B cell (primary cell): ENCODE measurements at regions of chr1 and their contacts with region 1.

Region 1: GRCh38 chr1:224182866-224183590 is at the start of gene DEGS1:
- DNase-seq: peak; percentile 93
- ATAC-seq: peak; percentile 82
- H3K4me3 ChIP-seq: peak within 1 kb of the TSS; percentile 74 to 90 (median 82)
- H3K4me3 Mint-ChIP-seq: peak within 1 kb of the TSS; percentile 93
- H3K27ac ChIP-seq: peak within 1 kb of the TSS; percentile 90 to 99
- H3K27ac Mint-ChIP-seq: peak within 1 kb of the TSS; percentile 94
- H3K4me1 ChIP-seq: peaks cover 41 to 51% of the 10 kb centered on the region in 2 donors
- H3K4me1 Mint-ChIP-seq: peaks cover 36% of the 10 kb centered on the region
- H3K27me3 ChIP-seq: no peaks in the 10 kb centered on the region
- H3K27me3 Mint-ChIP-seq: no peaks in the 10 kb centered on the region
- CTCF ChIP-seq: no peak
- total RNA-seq, gene DEGS1: 51.3 and 52.1 TPM in 2 replicates

Region 2: GRCh38 chr1:224127925-224128819 is 54.9 kb before region 1 on chr1:
- CTCF ChIA-PET with region 1: no interaction called
- POLR2A ChIA-PET with region 1: no interaction called
- intact Hi-C with region 1: no loop called
- DNase-seq: no peak
- ATAC-seq: no peak
- H3K4me3 ChIP-seq: no peak overlapping the region
- H3K4me3 Mint-ChIP-seq: no peak overlapping the region
- H3K27ac ChIP-seq: no peak overlapping the region
- H3K27ac Mint-ChIP-seq: no peak overlapping the region
- H3K4me1 ChIP-seq: no peaks in the 10 kb centered on the region
- H3K4me1 Mint-ChIP-seq: peaks cover 9% of the 10 kb centered on the region
- H3K27me3 ChIP-seq: no peaks in the 10 kb centered on the region
- H3K27me3 Mint-ChIP-seq: no peaks in the 10 kb centered on the region
- CTCF ChIP-seq: no peak

Region 3: DNA sequence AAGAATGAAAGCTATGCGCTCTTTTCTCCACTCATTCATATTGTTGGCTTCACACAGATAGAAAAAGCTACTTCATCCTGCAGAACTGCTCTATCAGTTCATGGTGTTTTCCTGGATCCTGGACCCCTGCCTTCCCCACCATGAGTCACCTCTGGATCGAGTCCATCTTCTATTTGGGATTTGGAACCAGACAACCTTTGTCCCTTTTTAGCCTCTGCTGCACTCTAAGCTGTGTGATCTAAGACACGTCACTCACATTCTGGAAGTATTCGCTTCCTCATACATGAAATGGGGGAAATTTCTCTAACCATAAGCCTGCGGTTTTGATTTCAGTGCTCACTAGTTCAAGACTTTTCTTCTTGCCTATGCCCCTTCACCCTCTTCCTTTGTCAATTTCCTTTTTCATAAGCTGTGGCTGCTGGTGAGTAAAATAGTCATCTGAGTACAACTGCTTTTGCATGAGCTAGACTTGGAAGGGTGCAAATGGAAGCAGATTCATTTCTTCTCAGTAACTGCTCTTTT is 14.1 kb before region 1 on chr1:
- CTCF ChIA-PET with region 1: interaction called, 20 read pairs
- POLR2A ChIA-PET with region 1: interaction called, 19 read pairs
- intact Hi-C with region 1: loop called (anchors 2 kb)
- DNase-seq: peak; percentile 85
- ATAC-seq: peak; percentile 86
- H3K4me3 ChIP-seq: peak overlapping the region in 1 of 5 experiments; percentile 40
- H3K4me3 Mint-ChIP-seq: peak overlapping the region; percentile 53
- H3K27ac ChIP-seq: peak overlapping the region; percentile 35 to 43
- H3K27ac Mint-ChIP-seq: peak overlapping the region; percentile 48
- H3K4me1 ChIP-seq: peaks cover 26 to 30% of the 10 kb centered on the region in 2 donors
- H3K4me1 Mint-ChIP-seq: peaks cover 27% of the 10 kb centered on the region
- H3K27me3 ChIP-seq: no peaks in the 10 kb centered on the region
- H3K27me3 Mint-ChIP-seq: no peaks in the 10 kb centered on the region
- CTCF ChIP-seq: no peak

Region 4: GRCh38 chr1:224245188-224245587 is 62.2 kb after region 1 on chr1:
- CTCF ChIA-PET with region 1: interaction called, 4 read pairs
- POLR2A ChIA-PET with region 1: interaction called, 21 read pairs
- intact Hi-C with region 1: loop called (anchors 2 kb)
- DNase-seq: peak; percentile 78
- ATAC-seq: peak; percentile 98
- H3K4me3 ChIP-seq: peak overlapping the region in 1 of 5 experiments; percentile 36
- H3K4me3 Mint-ChIP-seq: peak overlapping the region; percentile 21
- H3K27ac ChIP-seq: peak overlapping the region; percentile 90 to 91
- H3K27ac Mint-ChIP-seq: peak overlapping the region; percentile 97
- H3K4me1 ChIP-seq: peaks cover 33 to 36% of the 10 kb centered on the region in 2 donors
- H3K4me1 Mint-ChIP-seq: peaks cover 26% of the 10 kb centered on the region
- H3K27me3 ChIP-seq: no peaks in the 10 kb centered on the region
- H3K27me3 Mint-ChIP-seq: no peaks in the 10 kb centered on the region
- CTCF ChIP-seq: no peak

Region 5: DNA sequence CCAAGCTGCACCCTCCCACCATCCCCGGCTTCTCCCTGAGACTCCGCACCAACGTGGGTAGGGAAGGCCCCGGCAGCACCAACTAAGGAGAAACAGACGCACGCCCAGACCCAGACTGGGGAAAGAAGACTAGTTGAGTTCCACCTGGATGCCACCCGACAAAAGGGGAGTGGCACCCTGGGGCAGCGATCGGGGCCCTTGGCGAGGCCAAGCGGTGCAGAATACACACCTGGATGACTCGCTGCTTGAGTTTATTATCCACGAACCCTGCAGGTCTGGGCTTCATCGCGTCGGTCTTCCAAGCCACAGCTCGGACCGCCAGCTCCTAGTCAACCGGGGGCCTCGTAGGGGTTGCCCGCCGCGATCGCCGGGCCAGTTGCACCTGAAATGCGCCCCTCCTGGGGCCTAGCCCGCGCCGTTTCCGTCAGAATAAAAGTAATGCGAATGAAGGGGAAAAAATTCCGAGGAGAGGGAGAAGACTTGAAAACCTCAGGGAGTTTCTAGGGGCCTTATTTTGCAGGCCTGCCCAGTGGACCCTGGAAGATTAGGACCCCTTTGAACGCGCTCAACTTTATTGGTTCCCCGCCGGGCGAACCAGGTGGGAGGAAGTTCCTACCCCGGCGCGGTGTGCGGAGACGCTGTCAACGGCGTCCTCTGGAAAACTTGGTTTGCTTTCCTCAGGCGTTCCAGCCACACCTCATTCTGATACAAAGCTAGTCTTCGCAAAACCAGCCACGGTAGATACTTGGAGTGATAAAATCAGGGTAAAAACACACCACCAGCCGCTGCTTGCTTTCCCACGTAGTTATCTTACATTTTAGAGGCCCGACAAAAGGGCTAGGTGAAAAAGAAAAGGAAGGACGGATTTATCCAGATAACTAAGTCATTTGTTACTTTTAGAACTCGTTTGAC is 147.1 kb after region 1 on chr1 and contains the start of gene NVL:
- CTCF ChIA-PET with region 1: interaction called, 4 read pairs
- POLR2A ChIA-PET with region 1: interaction called, 9 read pairs
- intact Hi-C with region 1: loop called (anchors 1 kb)
- DNase-seq: peak; percentile 92
- ATAC-seq: peak; percentile 86
- H3K4me3 ChIP-seq: peak within 1 kb of the TSS; percentile 61 to 88 (median 81)
- H3K4me3 Mint-ChIP-seq: peak within 1 kb of the TSS; percentile 99
- H3K27ac ChIP-seq: peak within 1 kb of the TSS; percentile 94 to 95
- H3K27ac Mint-ChIP-seq: peak within 1 kb of the TSS; percentile 100
- H3K4me1 ChIP-seq: peaks cover 11 to 25% of the 10 kb centered on the region in 2 donors
- H3K4me1 Mint-ChIP-seq: peaks cover 46% of the 10 kb centered on the region
- H3K27me3 ChIP-seq: no peaks in the 10 kb centered on the region
- H3K27me3 Mint-ChIP-seq: no peaks in the 10 kb centered on the region
- CTCF ChIP-seq: no peak
- total RNA-seq, gene NVL: 45.5 and 47.8 TPM in 2 replicates

Region 6: DNA sequence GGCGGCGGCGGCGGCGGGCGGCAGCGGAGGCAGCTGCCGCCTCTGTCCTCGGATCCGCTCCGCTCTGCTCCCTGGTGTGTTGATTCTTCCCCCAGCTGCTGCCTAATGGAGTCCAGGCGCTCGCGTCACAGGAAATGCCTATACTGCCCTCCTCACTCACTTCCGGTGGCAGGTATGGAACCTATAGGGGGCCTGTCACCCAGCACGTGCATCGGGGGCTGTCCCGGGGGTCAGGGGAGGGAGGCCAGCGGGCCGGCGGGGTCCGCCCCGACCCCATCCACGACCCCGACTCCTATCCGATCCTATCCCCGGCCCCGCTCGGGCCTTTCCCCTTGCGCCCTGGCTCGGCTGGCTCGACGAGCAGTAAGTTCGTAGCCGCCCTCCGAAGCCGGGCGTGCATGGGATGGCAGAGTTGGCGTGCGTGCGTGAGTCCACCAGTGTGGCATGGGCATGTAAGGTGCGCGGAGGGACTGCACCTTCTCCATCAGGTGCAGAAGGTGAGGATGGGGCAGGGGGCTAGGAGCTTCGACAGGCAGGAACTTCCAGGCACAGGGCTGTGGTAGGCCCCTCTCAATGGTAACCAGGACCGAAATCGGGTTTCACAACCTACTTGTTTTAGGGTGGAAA is 251.8 kb after region 1 on chr1 and contains the start of gene WDR26:
- CTCF ChIA-PET with region 1: no interaction called
- POLR2A ChIA-PET with region 1: interaction called, 3 read pairs
- intact Hi-C with region 1: loop called (anchors 2 kb)
- DNase-seq: peak; percentile 91
- ATAC-seq: peak; percentile 83
- H3K4me3 ChIP-seq: peak within 1 kb of the TSS; percentile 65 to 97 (median 92)
- H3K4me3 Mint-ChIP-seq: peak within 1 kb of the TSS; percentile 99
- H3K27ac ChIP-seq: peak within 1 kb of the TSS; percentile 92 to 93
- H3K27ac Mint-ChIP-seq: peak within 1 kb of the TSS; percentile 99
- H3K4me1 ChIP-seq: peaks cover 27 to 41% of the 10 kb centered on the region in 2 donors
- H3K4me1 Mint-ChIP-seq: peaks cover 44% of the 10 kb centered on the region
- H3K27me3 ChIP-seq: no peaks in the 10 kb centered on the region
- H3K27me3 Mint-ChIP-seq: no peaks in the 10 kb centered on the region
- CTCF ChIP-seq: no peak
- total RNA-seq, gene WDR26: 108 and 111 TPM in 2 replicates